Motor neuron (in vitro differentiated cells): ENCODE measurements at regions of chr5 and their contacts with region 1.

Region 1: GRCh38 chr5:128844354-128844923 is 120.8 kb upstream of the SLC27A6 start:
- ATAC-seq: no peak
- H3K4me3 ChIP-seq: no peak overlapping the region
- H3K27ac ChIP-seq: no peak overlapping the region
- H3K4me1 ChIP-seq: no peaks in the 10 kb centered on the region

Region 2: DNA sequence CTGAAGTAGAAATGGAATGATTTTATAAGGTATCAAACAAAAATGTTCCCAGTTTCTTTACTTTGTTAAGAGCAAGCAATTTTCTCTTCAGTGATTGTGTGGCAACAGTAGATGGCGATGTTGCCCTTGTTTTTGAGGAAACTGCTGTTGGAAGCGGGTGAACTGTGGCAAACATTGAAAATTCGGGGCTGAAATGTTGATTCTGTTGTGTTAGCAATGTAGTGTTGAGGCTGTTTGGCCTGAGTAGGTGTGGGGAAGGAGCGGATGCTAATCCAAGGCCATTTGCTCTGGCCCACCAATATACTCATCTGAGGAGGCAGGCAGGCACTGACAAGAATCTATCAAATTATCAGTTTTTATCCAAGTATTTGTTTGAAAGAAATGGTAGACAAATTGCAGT is 631.1 kb before region 1 on chr5:
- in situ Hi-C with region 1: loop called in 8 of 9 experiments (anchors 10 to 25 kb)
- ATAC-seq: peak; percentile 6 to 70 (median 52)
- H3K4me3 ChIP-seq: no peak overlapping the region
- H3K27ac ChIP-seq: no peak overlapping the region
- H3K4me1 ChIP-seq: no peaks in the 10 kb centered on the region

Region 3: GRCh38 chr5:128513806-128514205 is 330.6 kb before region 1 on chr5:
- in situ Hi-C with region 1: loop called in 1 of 9 experiments (anchors 25 kb)
- ATAC-seq: peak in 2 of 8 experiments; percentile 39 to 41
- H3K4me3 ChIP-seq: no peak overlapping the region
- H3K27ac ChIP-seq: no peak overlapping the region
- H3K4me1 ChIP-seq: no peaks in the 10 kb centered on the region

Region 4: GRCh38 chr5:128674825-128675446 is 169.5 kb before region 1 on chr5:
- in situ Hi-C with region 1: loop called in 3 of 9 experiments (anchors 10 to 25 kb)
- ATAC-seq: peak in 3 of 8 experiments; percentile 63 to 75 (median 67)
- H3K4me3 ChIP-seq: no peak overlapping the region
- H3K27ac ChIP-seq: no peak overlapping the region
- H3K4me1 ChIP-seq: no peaks in the 10 kb centered on the region

Region 5: GRCh38 chr5:128927644-128928043 is 83.2 kb after region 1 on chr5:
- in situ Hi-C with region 1: no loop called
- ATAC-seq: no peak
- H3K4me3 ChIP-seq: no peak overlapping the region
- H3K27ac ChIP-seq: no peak overlapping the region
- H3K4me1 ChIP-seq: no peaks in the 10 kb centered on the region

Region 6: DNA sequence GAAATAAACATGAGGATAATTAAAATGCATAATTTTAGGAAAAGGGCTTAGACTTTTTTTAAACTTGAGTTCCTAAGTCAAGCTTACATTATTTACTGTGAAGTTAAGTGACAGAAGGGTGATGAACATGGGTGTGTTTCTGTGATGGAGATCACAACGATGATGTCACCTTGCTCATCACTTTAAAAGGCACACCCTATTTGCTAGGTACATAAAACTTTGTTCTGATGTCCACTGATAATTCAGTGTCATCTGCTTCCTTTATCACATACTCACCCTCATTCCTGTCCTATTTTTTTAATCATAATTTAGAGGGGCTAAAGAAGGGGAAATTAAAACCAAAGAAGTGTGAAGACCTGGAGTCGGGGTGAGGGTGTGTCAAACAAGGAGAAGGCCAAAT is 300.5 kb after region 1 on chr5:
- in situ Hi-C with region 1: no loop called
- ATAC-seq: peak in 1 of 8 experiments; percentile 27
- H3K4me3 ChIP-seq: no peak overlapping the region
- H3K27ac ChIP-seq: no peak overlapping the region
- H3K4me1 ChIP-seq: no peaks in the 10 kb centered on the region